ENCODE measurements at regions of chr11 and their contacts with region 1.

Region 1: DNA sequence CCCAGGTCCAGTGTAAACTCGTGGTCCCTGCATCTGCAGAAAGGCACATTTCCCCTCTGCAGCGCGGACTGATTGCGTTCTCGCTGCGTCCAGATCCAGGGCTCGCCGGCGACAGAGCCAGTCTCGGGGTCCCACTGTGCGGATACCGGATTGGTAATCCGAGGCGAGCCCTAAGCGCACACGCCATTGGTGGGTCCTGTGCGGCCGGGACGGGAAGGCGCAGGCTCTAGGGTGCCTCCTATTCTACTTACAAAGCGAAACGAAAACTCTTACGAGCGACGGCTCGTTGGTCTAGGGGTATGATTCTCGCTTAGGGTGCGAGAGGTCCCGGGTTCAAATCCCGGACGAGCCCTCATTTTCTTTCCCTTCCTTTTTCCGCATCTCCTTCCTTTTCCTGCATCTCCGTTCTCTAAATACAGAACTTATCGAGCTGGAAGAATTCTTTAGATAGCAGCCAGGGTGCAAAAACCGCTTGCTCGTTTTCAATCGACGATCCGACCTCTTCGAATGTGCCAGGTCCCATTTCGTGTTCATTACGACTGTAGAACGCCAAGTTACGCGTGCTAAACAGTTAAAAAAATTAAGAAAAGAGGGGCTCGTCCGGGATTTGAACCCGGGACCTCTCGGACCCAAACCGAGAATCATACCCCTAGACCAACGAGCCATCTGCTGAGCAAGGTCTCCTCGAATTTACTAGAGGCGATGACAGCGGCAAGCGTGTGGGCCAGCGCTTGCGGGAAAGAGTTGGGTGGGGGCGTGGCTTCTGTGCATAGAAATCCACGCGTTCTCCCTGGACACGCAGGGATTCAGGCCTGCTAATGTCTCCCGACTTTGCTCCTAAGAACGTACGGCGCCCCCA is 29.2 kb upstream of the WNT11 start:
- DNase-seq: peak; percentile 99
- ATAC-seq: peak; percentile 77
- H3K4me3 ChIP-seq: peak overlapping the region; percentile 89
- H3K27ac ChIP-seq: peak overlapping the region; percentile 38
- H3K4me1 ChIP-seq: peaks cover 15% of the 10 kb centered on the region
- H3K27me3 ChIP-seq: no peaks in the 10 kb centered on the region
- CTCF ChIP-seq: no peak

Region 2: DNA sequence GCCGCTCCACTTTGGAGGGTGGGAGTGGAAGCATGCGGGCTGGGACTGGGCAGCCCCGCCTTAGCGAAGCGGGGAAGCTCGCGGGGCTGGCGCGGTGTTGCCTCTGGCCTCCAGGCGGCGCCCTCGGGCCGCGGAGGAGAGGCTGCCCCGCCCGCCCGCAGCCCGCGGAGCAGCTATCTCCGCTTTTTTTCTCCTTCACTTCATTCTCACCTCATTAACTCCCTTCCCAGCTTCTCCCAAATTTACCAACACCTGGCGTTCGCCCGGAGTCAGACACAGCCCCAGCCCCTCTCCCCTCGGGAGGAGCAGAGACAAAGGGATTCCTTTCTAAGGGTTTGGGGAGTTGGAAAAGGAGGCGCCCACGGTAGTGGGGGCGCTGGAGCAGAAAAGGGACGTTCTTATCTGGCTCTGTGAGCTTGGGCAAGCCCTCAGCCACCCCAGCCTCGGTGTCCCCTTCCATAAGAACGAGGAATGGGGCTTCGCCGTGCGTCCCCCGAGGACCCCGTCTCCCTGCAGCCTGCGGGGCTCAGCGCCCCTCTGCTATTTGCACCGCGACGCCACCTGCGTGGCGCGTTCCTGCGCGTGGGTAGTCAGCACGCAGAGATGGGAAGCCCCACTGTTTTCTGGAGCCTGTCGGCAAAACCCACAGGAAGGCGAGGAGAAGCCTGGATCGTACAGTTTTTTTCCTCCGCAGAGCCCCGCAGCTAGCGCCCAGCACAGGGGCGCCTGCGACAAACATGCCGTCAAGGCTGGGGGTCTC is 27.6 kb before region 1 on chr11:
- CTCF ChIA-PET with region 1: interaction called, 4 read pairs
- POLR2A ChIA-PET with region 1: no interaction called
- intact Hi-C with region 1: loop called (anchors 2 kb)
- DNase-seq: peak; percentile 93
- ATAC-seq: peak; percentile 56
- H3K4me3 ChIP-seq: peak overlapping the region; percentile 67
- H3K27ac ChIP-seq: no peak overlapping the region
- H3K4me1 ChIP-seq: peaks cover 32% of the 10 kb centered on the region
- H3K27me3 ChIP-seq: peaks cover 49% of the 10 kb centered on the region
- CTCF ChIP-seq: peak; percentile 94

Region 3: DNA sequence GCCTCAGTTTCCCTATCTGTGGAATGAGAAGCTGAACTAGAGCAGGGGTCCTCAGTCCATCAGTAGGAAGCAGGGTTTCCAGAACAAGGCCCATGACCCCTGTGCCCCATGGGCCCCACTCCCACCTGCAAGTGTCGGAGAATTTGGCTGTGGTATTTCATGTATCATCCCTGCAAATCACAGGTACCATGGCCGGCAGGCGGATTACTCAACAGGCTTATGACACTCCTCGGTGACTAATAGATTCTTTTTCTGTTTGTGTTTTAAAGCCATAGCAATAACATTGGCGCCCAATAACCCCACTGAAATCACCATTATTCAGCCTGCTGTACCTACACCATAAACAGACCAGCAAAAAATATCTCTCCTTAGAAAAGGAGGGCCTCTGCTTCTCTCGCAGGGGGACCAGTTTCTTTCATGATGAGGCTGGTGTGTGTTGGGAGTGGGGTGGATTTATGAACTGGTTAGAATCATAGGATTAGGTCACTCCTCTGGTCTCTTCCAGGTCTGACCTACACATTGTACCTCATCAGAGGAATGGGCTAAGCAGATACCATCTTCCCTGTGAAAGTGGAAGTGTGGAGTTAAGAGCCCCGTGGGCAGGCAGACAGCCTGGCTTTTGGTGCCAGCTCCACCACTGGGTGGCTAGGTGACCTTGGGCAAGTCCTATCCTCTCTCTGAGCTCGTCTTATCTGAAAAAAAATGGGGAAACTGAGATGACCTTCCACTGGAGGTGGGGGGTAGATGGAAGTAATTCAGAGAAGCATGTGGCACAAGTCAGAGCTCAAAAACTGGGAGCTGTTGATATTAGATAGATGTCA is 31.0 kb after region 1 on chr11:
- CTCF ChIA-PET with region 1: no interaction called
- POLR2A ChIA-PET with region 1: no interaction called
- intact Hi-C with region 1: loop called (anchors 1 kb)
- DNase-seq: peak; percentile 96
- ATAC-seq: peak; percentile 94
- H3K4me3 ChIP-seq: peak overlapping the region; percentile 12; the same call in 1 of the 2 replicates
- H3K27ac ChIP-seq: peak overlapping the region; percentile 50
- H3K4me1 ChIP-seq: peaks cover 17% of the 10 kb centered on the region
- H3K27me3 ChIP-seq: no peaks in the 10 kb centered on the region
- CTCF ChIP-seq: no peak